H1 (cell line): ENCODE measurements at regions of chr20 and their contacts with region 1.

Region 1: DNA sequence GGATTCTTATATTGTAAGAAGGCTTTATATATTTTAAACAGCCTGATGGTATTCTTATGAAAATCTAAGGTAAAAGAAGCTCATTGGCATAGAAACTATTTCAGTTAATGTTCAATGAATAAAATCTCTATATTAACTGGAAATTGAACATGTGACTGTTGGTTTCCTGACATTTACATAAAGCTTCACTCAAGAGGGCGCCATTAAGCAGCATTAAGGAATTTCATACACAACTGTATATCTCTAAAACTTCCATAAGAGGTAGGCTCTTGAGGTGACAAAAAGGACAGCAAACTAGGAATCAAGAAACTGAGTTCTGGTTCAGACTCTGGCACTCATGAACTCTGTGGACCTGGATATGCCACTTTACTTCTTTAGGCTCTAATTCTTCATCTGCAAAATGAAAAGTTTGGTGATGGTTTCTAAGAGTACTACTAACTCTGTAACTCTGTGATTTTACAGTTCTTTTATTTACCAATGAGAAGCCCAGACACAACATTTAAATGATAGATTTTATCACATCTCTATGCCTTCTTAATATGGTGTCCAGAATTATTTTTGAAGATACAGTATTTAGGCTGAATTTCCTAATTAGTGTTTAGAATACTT is 147.5 kb downstream of the FLRT3 start:
- DNase-seq: no peak
- H3K4me3 ChIP-seq: no peak overlapping the region
- H3K27ac ChIP-seq: no peak overlapping the region
- H3K4me1 ChIP-seq: no peaks in the 10 kb centered on the region; a peak in 1 of 7 replicates
- H3K27me3 ChIP-seq: no peaks in the 10 kb centered on the region
- CTCF ChIP-seq: peak in 2 of 3 experiments; percentile 7 to 33; a peak in 2 of 4 replicates
- EP300 ChIP-seq: no peak
- POLR2A ChIP-seq: no peak
- RAD21 ChIP-seq: peak; percentile 34 to 51

Region 2: GRCh38 chr20:14142171-14142570 is 47.7 kb before region 1 on chr20:
- CTCF ChIA-PET with region 1: interaction called, 18 read pairs
- POLR2A ChIA-PET with region 1: no interaction called
- DNase-seq: peak; percentile 46 to 58
- H3K4me3 ChIP-seq: no peak overlapping the region
- H3K27ac ChIP-seq: no peak overlapping the region
- H3K4me1 ChIP-seq: no peaks in the 10 kb centered on the region
- H3K27me3 ChIP-seq: peaks cover 0 to 2% (median 0%) of the 10 kb centered on the region in 4 experiments; a peak in 1 of 7 replicates
- CTCF ChIP-seq: peak; percentile 70 to 86 (median 74)
- EP300 ChIP-seq: peak in 1 of 2 experiments; percentile 69; a peak in 1 of 3 replicates
- POLR2A ChIP-seq: no peak
- RAD21 ChIP-seq: peak; percentile 95 to 96

Region 3: DNA sequence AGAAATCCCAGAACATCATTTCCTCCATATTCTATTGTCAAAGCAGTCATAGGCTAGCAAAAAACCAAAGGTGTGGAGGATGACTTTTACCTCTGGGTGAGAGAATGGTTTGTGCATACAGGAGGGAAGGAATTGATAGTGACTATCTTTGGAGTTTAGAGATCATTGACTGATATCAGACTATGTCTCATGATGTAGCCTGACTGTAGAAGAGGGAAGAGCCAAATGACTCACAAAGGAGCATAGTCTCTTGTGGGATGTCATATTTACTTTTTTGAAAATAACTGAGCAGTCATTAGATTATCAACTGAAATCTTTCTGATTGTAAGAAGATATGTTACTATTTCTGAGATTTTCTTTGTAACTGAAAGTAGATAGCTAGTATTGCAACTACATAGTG is 10.9 kb before region 1 on chr20:
- CTCF ChIA-PET with region 1: interaction called, 11 read pairs
- POLR2A ChIA-PET with region 1: no interaction called
- DNase-seq: no peak
- H3K4me3 ChIP-seq: no peak overlapping the region
- H3K27ac ChIP-seq: no peak overlapping the region
- H3K4me1 ChIP-seq: no peaks in the 10 kb centered on the region
- H3K27me3 ChIP-seq: no peaks in the 10 kb centered on the region
- CTCF ChIP-seq: no peak
- EP300 ChIP-seq: no peak
- POLR2A ChIP-seq: no peak
- RAD21 ChIP-seq: no peak

Region 4: DNA sequence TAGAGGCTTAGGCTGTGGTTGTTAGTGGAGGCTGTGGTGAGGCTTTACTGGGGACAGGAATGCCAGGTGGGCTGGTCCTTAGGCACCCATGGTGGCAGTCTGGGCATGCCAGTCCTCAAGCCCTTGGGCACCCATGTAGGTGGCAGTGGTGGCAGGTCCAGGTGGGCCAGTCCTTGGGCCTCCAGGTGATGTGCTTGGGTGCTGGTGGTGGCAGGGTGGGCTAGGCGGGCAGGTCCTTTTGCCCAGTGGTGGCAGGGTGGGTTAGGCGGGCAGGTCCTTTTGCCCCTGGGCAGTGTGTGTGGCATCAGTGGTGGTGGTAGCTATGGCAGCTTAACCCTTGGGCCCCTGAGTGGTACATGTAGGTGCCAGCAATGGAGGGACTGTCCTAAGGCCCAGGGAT is 13.8 kb after region 1 on chr20:
- CTCF ChIA-PET with region 1: interaction called, 30 read pairs
- POLR2A ChIA-PET with region 1: no interaction called
- DNase-seq: no peak
- H3K4me3 ChIP-seq: no peak overlapping the region
- H3K27ac ChIP-seq: no peak overlapping the region
- H3K4me1 ChIP-seq: no peaks in the 10 kb centered on the region
- H3K27me3 ChIP-seq: no peaks in the 10 kb centered on the region
- CTCF ChIP-seq: no peak
- EP300 ChIP-seq: no peak
- POLR2A ChIP-seq: no peak
- RAD21 ChIP-seq: no peak

Region 5: GRCh38 chr20:14210146-14210545 is 20.2 kb after region 1 on chr20:
- CTCF ChIA-PET with region 1: interaction called, 30 read pairs
- POLR2A ChIA-PET with region 1: no interaction called
- DNase-seq: no peak
- H3K4me3 ChIP-seq: no peak overlapping the region
- H3K27ac ChIP-seq: no peak overlapping the region
- H3K4me1 ChIP-seq: no peaks in the 10 kb centered on the region
- H3K27me3 ChIP-seq: no peaks in the 10 kb centered on the region
- CTCF ChIP-seq: no peak
- EP300 ChIP-seq: no peak
- POLR2A ChIP-seq: no peak
- RAD21 ChIP-seq: no peak